Motor neuron (in vitro differentiated cells): ENCODE measurements at regions of chr3 and their contacts with region 1.

Region 1: DNA sequence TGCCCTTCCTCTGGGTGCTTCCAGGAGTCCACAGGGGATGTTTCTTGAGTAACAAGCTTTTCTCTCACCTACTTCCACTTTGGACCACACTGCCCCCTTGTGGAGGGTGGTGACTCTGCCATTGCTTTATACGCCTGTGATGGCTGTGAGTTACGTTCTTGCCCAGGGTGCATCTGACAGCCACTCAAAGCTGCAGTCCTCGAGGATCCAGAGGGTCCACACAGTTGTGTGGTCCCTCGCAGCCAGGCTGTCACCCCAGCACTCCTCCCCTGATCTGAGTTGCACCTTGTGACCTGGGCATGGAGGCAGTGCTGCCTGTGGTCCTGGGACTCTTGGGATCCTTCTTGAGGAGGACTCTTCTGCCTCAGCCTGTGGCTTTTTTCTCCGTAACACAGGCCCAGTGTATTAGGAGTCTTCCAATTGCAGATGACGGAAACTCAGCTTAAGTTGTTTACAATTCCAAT is 23.4 kb downstream of the FOXL2 start:
- ATAC-seq: peak; percentile 32 to 97 (median 64)
- H3K4me3 ChIP-seq: no peak overlapping the region
- H3K27ac ChIP-seq: no peak overlapping the region
- H3K4me1 ChIP-seq: no peaks in the 10 kb centered on the region

Region 2: GRCh38 chr3:138694287-138695007 is 229.1 kb before region 1 on chr3:
- in situ Hi-C with region 1: loop called in 3 of 9 experiments (anchors 5 to 10 kb)
- ATAC-seq: peak in 7 of 8 experiments; percentile 58 to 98 (median 66)
- H3K4me3 ChIP-seq: no peak overlapping the region
- H3K27ac ChIP-seq: no peak overlapping the region
- H3K4me1 ChIP-seq: no peaks in the 10 kb centered on the region

Region 3: DNA sequence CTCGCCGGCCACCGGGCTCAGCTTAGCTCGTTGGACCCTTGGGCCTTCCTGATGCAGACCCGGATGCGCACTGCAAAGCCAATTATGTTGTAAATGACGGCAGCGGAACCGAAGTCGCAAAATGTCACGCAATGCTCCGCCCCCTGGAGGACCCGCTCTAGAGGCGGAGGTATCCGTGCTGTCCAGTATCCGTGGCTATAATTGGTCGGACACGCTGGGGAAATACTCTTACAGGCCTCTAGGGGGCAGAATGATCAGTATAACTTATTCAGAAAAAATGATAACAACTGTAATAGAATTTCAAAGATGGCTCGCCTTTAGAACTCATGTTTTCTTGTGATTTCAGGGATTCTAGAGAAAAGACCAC is 97.3 kb after region 1 on chr3 and contains the start of gene PRR23B:
- in situ Hi-C with region 1: no loop called
- ATAC-seq: no peak
- H3K4me3 ChIP-seq: no peak within 1 kb of the TSS
- H3K27ac ChIP-seq: no peak within 1 kb of the TSS
- H3K4me1 ChIP-seq: no peaks in the 10 kb centered on the region
- total RNA-seq, gene PRR23B: 0.14 to 0.71 (median 0.20) TPM in 3 of 8 experiments, not detected in the others

Region 4: DNA sequence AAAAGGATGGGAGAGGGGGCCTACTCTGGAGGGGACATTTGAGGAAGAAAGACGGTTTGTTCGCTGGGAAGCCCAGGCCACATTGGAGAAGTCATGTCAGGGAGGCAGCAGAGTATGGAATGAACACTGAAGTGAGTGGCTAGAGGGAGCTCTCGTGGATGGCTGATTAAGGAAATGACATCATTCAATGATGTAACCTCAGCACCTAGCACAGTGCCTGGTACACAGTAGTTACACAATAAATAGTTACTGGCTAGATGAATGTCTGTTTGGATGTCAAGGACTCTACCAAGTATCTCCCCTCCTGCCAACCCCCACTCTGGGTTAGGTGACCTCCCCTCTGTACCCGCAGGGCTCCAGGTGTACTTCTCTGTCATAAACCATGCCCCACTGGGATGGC is 1132.5 kb after region 1 on chr3:
- in situ Hi-C with region 1: no loop called
- ATAC-seq: no peak
- H3K4me3 ChIP-seq: no peak overlapping the region
- H3K27ac ChIP-seq: no peak overlapping the region
- H3K4me1 ChIP-seq: peaks cover 40 to 60% of the 10 kb centered on the region in 2 donors